Activated T-helper 2 cell treated with anti-CD3 and anti-CD28 coated beads, Interferon-gamma antibody, Interleukin-2, Interleukin-4, amounts not matched to agents 10 μg/mL and 5 μg/mL and 100 μg/mL, durations not matched to agents 14 hours and 24 hours and 36 hours (primary cell): ENCODE measurements at regions of chr10 and their contacts with region 1.

Region 1: GRCh38 chr10:69087590-69088470 is at the start of gene SRGN:
- DNase-seq: peak; percentile 82
- H3K4me3 Mint-ChIP-seq: peak within 1 kb of the TSS; percentile 91
- H3K27ac Mint-ChIP-seq: peak within 1 kb of the TSS; percentile 91
- H3K4me1 Mint-ChIP-seq: peaks cover 43% of the 10 kb centered on the region
- H3K27me3 Mint-ChIP-seq: no peaks in the 10 kb centered on the region
- total RNA-seq, gene SRGN: 1,340 and 1,350 TPM in 2 replicates

Region 2: DNA sequence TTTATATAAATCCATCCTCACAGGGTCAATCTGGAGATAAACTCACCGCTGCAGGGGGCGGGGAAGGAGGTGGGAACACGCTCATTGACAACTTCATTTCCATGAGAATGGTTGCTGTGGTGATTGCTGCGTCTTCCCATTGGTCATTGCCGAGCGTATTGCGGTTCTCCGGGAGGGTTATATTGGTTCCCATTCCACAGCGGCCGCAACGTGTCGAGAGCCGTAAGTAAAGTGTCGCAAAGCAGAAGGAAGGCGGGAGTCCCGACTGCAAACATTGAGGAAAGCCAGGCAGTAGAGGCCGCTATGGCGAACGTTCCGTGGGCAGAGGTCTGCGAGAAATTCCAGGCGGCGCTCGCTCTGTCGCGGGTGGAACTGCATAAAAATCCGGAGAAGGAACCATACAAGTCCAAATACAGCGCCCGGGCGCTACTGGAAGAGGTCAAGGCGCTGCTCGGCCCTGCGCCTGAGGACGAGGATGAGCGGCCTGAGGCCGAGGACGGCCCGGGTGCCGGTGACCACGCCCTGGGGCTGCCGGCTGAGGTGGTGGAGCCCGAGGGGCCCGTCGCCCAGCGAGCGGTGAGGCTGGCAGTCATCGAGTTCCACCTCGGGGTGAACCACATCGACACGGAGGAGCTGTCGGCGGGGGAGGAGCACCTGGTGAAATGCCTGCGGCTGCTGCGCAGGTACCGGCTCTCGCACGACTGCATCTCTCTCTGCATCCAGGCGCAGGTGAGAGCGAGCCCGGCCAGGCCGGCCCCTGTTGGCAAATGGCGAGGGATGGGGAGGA is 99.1 kb before region 1 on chr10 and contains the start of gene KIFBP:
- intact Hi-C with region 1: loop called (anchors 1 kb)
- DNase-seq: peak; percentile 83
- H3K4me3 Mint-ChIP-seq: peak within 1 kb of the TSS; percentile 96
- H3K27ac Mint-ChIP-seq: peak within 1 kb of the TSS; percentile 90
- H3K4me1 Mint-ChIP-seq: peaks cover 36% of the 10 kb centered on the region
- H3K27me3 Mint-ChIP-seq: no peaks in the 10 kb centered on the region
- total RNA-seq, gene KIFBP: 16.7 and 17.1 TPM in 2 replicates

Region 3: DNA sequence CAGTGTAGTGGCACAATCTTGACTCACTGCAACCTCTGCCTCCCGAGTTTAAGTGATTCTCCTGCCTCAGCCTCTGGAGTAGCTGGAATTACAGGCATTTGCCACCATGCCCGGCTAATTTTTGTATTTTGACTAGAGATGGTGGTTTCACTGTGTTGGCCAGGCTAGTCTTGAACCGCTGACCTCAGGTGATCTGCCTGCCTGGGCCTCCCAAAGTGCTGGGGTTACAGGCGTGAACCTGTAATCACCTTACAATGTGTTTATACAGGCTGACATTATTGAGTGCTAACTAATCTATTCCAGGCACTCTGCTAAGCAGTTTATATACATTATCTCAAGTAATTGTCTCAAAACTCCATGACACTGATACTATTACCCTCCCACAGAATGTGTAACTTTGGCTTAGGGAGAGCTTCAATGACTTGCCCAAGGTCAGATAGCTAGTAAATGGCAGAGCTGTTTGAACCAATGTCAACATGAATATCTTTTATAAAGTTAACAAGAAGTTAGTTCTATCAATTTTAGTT is 62.4 kb before region 1 on chr10:
- intact Hi-C with region 1: loop called (anchors 1 kb)
- DNase-seq: no peak
- H3K4me3 Mint-ChIP-seq: no peak overlapping the region
- H3K27ac Mint-ChIP-seq: no peak overlapping the region
- H3K4me1 Mint-ChIP-seq: peaks cover 17% of the 10 kb centered on the region
- H3K27me3 Mint-ChIP-seq: no peaks in the 10 kb centered on the region

Region 4: GRCh38 chr10:69051303-69051702 is 36.5 kb before region 1 on chr10:
- intact Hi-C with region 1: loop called (anchors 1 kb)
- DNase-seq: peak; percentile 34
- H3K4me3 Mint-ChIP-seq: no peak overlapping the region
- H3K27ac Mint-ChIP-seq: peak overlapping the region; percentile 79
- H3K4me1 Mint-ChIP-seq: peaks cover 64% of the 10 kb centered on the region
- H3K27me3 Mint-ChIP-seq: no peaks in the 10 kb centered on the region

Region 5: GRCh38 chr10:69123747-69124562 is 36.1 kb after region 1 on chr10 and contains the start of gene VPS26A:
- intact Hi-C with region 1: loop called (anchors 1 kb)
- DNase-seq: peak; percentile 98
- H3K4me3 Mint-ChIP-seq: peak within 1 kb of the TSS; percentile 94
- H3K27ac Mint-ChIP-seq: peak within 1 kb of the TSS; percentile 86
- H3K4me1 Mint-ChIP-seq: peaks cover 21% of the 10 kb centered on the region
- H3K27me3 Mint-ChIP-seq: no peaks in the 10 kb centered on the region
- total RNA-seq, gene VPS26A: 28.4 and 31.1 TPM in 2 replicates

Region 6: GRCh38 chr10:69202332-69202731 is 114.5 kb after region 1 on chr10:
- intact Hi-C with region 1: loop called (anchors 5 kb)
- DNase-seq: no peak
- H3K4me3 Mint-ChIP-seq: peak overlapping the region; percentile 54
- H3K27ac Mint-ChIP-seq: peak overlapping the region; percentile 73
- H3K4me1 Mint-ChIP-seq: peaks cover 42% of the 10 kb centered on the region
- H3K27me3 Mint-ChIP-seq: no peaks in the 10 kb centered on the region